ENCODE measurements at regions of chr17 and their contacts with region 1.

Region 1: GRCh38 chr17:48878918-48879898 is 13.4 kb upstream of the ATP5MC1 start:
- DNase-seq: no peak
- ATAC-seq: peak; percentile 96
- H3K4me3 Mint-ChIP-seq: no peak overlapping the region
- H3K27ac Mint-ChIP-seq: no peak overlapping the region
- H3K4me1 Mint-ChIP-seq: peaks cover 2% of the 10 kb centered on the region
- H3K27me3 Mint-ChIP-seq: no peaks in the 10 kb centered on the region
- CTCF ChIP-seq: peak; percentile 82

Region 2: GRCh38 chr17:48603959-48604769 is 275.0 kb before region 1 on chr17:
- CTCF ChIA-PET with region 1: no interaction called
- POLR2A ChIA-PET with region 1: interaction called, 14 read pairs
- intact Hi-C with region 1: no loop called
- DNase-seq: no peak
- ATAC-seq: no peak
- H3K4me3 Mint-ChIP-seq: no peak overlapping the region
- H3K27ac Mint-ChIP-seq: no peak overlapping the region
- H3K4me1 Mint-ChIP-seq: peaks cover 6% of the 10 kb centered on the region
- H3K27me3 Mint-ChIP-seq: peaks cover 64% of the 10 kb centered on the region
- CTCF ChIP-seq: no peak

Region 3: GRCh38 chr17:48678141-48678971 is 200.9 kb before region 1 on chr17:
- CTCF ChIA-PET with region 1: interaction called, 101 read pairs
- POLR2A ChIA-PET with region 1: interaction called, 4 read pairs
- intact Hi-C with region 1: loop called (anchors 1 kb)
- DNase-seq: peak; percentile 67
- ATAC-seq: peak; percentile 92
- H3K4me3 Mint-ChIP-seq: peak overlapping the region; percentile 35
- H3K27ac Mint-ChIP-seq: no peak overlapping the region
- H3K4me1 Mint-ChIP-seq: peaks cover 2% of the 10 kb centered on the region
- H3K27me3 Mint-ChIP-seq: peaks cover 34% of the 10 kb centered on the region
- CTCF ChIP-seq: peak; percentile 88

Region 4: GRCh38 chr17:48799069-48799723 is 80.0 kb before region 1 on chr17:
- CTCF ChIA-PET with region 1: interaction called, 379 read pairs
- POLR2A ChIA-PET with region 1: interaction called, 3 read pairs
- intact Hi-C with region 1: no loop called
- DNase-seq: no peak
- ATAC-seq: no peak
- H3K4me3 Mint-ChIP-seq: no peak overlapping the region
- H3K27ac Mint-ChIP-seq: no peak overlapping the region
- H3K4me1 Mint-ChIP-seq: no peaks in the 10 kb centered on the region
- H3K27me3 Mint-ChIP-seq: peaks cover 28% of the 10 kb centered on the region
- CTCF ChIP-seq: no peak

Region 5: DNA sequence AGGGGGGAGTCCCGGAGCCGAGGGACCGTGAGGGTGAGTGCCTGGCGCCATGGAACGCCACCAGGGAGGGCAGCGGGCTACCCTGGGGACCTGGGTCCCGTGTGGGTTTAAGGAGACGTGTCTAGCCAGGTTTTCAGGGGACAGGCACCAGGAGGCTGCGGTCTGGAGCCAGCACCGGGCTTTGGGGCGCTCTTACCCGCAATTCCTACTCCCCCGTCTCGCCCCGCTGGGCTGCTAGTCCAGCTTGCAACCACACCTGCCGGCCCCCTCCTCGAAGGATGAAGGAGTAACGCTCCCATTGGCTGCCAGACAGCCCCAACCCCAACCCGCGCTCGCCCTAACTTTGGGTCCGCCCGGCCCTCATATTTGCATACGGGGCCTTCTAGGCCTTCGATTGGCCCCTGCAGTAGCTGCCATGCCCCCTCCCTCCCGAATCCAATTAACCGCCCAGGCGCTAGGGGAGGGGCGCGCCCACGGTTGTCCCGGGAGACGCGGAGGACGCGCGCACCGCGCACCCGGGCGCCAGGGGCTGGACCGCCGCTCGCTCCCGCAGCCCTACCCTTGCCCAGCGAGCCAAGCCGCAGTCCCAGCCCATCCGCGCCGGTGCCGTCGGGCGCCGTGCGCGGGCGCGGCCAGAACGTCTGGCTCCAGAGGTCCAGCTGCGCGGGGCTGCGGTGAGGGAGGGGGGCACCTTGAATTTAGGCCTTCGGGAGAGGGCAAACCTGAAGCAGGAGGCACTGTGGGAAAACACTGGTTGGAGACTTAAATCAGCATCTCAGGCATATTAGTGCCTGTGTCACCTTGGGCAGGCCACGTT is 62.2 kb before region 1 on chr17 and contains the start of gene TTLL6:
- CTCF ChIA-PET with region 1: interaction called, 379 read pairs
- POLR2A ChIA-PET with region 1: interaction called, 14 read pairs
- intact Hi-C with region 1: loop called (anchors 1 kb)
- DNase-seq: peak; percentile 57
- ATAC-seq: peak; percentile 96
- H3K4me3 Mint-ChIP-seq: peak within 1 kb of the TSS; percentile 84
- H3K27ac Mint-ChIP-seq: no peak within 1 kb of the TSS
- H3K4me1 Mint-ChIP-seq: peaks cover 18% of the 10 kb centered on the region
- H3K27me3 Mint-ChIP-seq: peaks cover 26% of the 10 kb centered on the region
- CTCF ChIP-seq: no peak
- total RNA-seq, gene TTLL6: not detected in 2 replicates

Region 6: DNA sequence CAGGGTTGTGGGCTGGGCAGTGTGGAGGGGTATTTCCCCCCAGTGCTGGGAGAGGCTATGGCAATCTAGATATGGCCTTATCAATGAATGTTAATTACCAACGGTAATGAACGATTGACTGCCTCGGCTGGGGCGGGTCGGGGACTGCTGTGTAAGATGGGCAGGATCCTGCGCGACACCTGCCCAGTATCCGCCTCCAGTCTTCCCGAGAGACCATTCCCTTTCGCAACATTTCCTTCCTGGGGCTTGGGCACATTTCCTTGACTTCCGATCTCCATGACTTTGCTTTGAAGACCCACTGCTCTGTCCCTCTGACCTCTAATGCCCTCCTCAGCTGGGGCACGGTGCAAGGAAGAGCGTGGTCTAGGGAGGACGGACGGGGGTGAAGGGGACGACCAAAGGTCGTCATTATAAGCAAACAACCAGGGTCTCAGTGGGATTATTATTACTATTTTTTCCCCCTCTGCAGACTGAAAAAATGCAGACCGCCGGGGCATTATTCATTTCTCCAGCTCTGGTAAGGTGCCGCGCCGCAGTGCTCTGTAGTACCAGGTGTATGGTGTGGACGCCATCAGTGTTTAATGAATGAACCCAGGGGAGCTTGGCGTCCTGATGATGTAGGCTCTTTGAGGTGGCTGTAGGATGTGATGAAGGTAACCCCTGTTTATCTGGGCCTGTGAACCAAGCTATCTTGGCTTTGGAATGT is 13.9 kb after region 1 on chr17:
- CTCF ChIA-PET with region 1: interaction called, 16 read pairs
- POLR2A ChIA-PET with region 1: interaction called, 13 read pairs
- intact Hi-C with region 1: no loop called
- DNase-seq: no peak
- ATAC-seq: no peak
- H3K4me3 Mint-ChIP-seq: peak overlapping the region; percentile 94
- H3K27ac Mint-ChIP-seq: peak overlapping the region; percentile 94
- H3K4me1 Mint-ChIP-seq: peaks cover 34% of the 10 kb centered on the region
- H3K27me3 Mint-ChIP-seq: no peaks in the 10 kb centered on the region
- CTCF ChIP-seq: no peak

Region 7: GRCh38 chr17:49162866-49163265 is 283.7 kb after region 1 on chr17:
- CTCF ChIA-PET with region 1: no interaction called
- POLR2A ChIA-PET with region 1: no interaction called
- intact Hi-C with region 1: no loop called
- DNase-seq: no peak
- ATAC-seq: no peak
- H3K4me3 Mint-ChIP-seq: no peak overlapping the region
- H3K27ac Mint-ChIP-seq: no peak overlapping the region
- H3K4me1 Mint-ChIP-seq: no peaks in the 10 kb centered on the region
- H3K27me3 Mint-ChIP-seq: peaks cover 31% of the 10 kb centered on the region
- CTCF ChIP-seq: no peak

Measured in activated B cell treated with CpG ODN at 0.5 μM for 24 hours (primary cell).